Endothelial cell of umbilical vein (primary cell): ENCODE measurements at regions of chr17 and their contacts with region 1.

Region 1: DNA sequence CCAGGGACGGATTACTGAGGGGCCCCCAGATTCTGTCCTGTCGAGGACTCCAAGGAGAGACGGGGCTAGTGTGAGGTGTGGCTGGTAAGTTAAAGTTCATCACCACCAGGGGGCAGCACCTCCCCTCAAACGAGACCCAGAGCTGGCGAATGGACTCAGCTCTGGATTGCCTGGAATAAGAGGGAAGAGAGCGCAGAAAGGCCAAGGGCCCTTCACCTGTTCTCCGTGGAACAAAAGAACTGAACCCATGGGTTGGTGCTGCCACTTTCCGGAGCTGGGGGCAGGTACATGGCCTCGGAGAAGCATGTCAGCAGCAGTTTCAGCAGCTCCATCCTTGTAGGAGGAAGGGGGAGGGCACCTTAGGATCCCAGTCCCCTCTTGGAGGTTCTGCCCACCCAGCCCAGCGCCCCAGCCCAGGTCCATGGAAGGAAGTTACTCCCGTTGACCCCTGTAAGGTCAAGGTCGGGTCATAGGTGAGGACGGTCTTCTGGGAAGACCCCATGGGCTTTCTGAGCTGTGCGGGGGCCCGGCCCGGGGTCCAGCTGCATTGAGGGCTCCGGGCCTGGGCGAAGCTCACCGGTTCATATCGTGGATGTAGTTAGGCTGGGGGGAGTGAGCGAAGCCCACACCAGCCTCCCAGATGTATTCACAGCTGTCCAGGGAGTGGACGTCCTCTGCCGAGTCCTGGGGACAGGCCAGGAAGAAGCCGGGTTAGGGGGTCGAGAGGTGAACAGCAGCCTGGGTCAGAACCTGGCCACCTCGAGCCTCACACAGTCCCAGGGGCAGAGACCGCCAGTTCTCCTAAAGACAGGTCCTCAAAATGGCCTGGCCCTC is 10.7 kb downstream of the HID1 start:
- DNase-seq: peak; percentile 83
- H3K4me3 ChIP-seq: no peak overlapping the region
- H3K27ac ChIP-seq: no peak overlapping the region
- H3K4me1 ChIP-seq: no peaks in the 10 kb centered on the region
- H3K27me3 ChIP-seq: no peaks in the 10 kb centered on the region
- CTCF ChIP-seq: peak; percentile 62 to 74
- POLR2A ChIP-seq: no peak

Region 2: GRCh38 chr17:74790161-74791054 is 171.5 kb before region 1 on chr17:
- CTCF ChIA-PET with region 1: interaction called, 26 read pairs
- POLR2A ChIA-PET with region 1: no interaction called
- dilution Hi-C with region 1: no loop called
- intact Hi-C with region 1: loop called (anchors 1 kb)
- DNase-seq: no peak
- H3K4me3 ChIP-seq: no peak overlapping the region
- H3K27ac ChIP-seq: no peak overlapping the region
- H3K4me1 ChIP-seq: no peaks in the 10 kb centered on the region
- H3K27me3 ChIP-seq: no peaks in the 10 kb centered on the region
- CTCF ChIP-seq: no peak
- POLR2A ChIP-seq: no peak

Region 3: GRCh38 chr17:74815550-74816370 is 146.1 kb before region 1 on chr17:
- CTCF ChIA-PET with region 1: no interaction called
- POLR2A ChIA-PET with region 1: no interaction called
- dilution Hi-C with region 1: no loop called
- intact Hi-C with region 1: no loop called
- DNase-seq: peak; percentile 7
- H3K4me3 ChIP-seq: no peak overlapping the region
- H3K27ac ChIP-seq: no peak overlapping the region
- H3K4me1 ChIP-seq: no peaks in the 10 kb centered on the region
- H3K27me3 ChIP-seq: no peaks in the 10 kb centered on the region
- CTCF ChIP-seq: peak; percentile 31 to 37
- POLR2A ChIP-seq: no peak

Region 4: DNA sequence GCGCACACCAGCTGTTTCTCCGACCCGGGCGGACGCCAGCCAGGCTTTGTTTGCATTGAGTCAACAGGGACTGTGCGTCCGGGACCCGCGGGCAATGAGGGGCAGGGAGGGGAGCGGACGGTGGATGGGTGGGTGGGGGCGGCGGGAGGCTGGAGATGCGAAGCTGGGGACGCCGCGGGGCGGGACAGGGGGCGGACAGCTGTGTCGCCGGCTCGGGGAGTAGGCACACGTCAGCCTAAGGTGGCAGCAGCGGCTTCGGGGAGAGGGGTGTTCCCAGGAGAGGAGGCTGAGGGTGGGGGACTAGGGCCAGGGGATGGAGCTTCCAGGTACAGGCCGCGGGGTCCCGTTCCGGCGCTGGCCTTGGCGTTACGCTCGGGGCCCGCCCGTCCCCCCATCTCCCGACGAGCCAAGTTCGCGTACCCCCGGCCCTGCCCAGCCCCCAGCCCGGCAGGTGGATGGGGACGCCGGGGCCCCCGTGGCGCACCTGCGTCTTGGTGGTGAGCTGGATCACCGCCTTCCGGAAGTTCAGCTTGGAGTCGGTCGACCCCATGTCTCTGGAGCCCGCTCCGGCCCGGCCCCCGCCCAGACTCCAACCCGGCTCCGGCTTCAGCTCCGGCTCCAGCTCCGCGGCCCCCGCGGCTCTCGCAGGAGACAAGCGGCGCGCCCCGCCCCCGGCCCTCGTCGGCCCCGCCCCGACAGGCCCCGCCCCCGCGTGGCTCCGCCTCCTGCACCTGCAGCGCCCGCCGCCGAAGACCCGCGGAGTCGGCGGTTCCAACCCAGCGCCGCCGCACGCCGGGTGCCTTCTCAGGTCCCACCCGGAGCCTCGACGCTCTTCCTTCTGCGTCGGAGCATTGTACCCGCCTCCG is 10.5 kb after region 1 on chr17 and contains the start of gene HID1:
- CTCF ChIA-PET with region 1: interaction called, 63 read pairs
- POLR2A ChIA-PET with region 1: interaction called, 4 read pairs
- dilution Hi-C with region 1: no loop called
- intact Hi-C with region 1: no loop called
- DNase-seq: peak; percentile 39
- H3K4me3 ChIP-seq: peak within 1 kb of the TSS; percentile 51 to 89 (median 74)
- H3K27ac ChIP-seq: no peak within 1 kb of the TSS
- H3K4me1 ChIP-seq: peaks cover 17% of the 10 kb centered on the region
- H3K27me3 ChIP-seq: peaks cover 5% of the 10 kb centered on the region in 2 experiments
- CTCF ChIP-seq: no peak
- POLR2A ChIP-seq: no peak
- total RNA-seq, gene HID1: 36.8 and 41.4 TPM in 2 replicates

Region 5: DNA sequence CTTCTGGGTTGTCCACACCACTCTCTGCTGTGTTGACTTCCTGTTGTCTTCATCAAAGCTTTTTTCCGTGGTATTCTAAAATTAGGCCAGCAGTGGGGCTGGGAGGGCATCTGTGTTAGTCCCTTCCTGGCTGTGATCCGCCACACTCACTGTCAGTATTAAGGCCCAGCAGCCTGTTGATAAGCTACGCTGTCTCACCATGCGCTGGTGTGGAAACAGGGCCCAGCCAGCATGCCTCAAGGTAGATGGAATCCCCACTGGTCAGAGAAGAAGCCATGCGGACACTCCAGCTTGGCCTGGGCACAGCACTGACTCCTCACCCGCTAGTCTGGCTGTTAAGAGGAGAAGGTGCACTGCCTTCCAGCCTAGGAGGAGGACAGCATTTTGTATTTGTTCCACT is 36.9 kb after region 1 on chr17:
- CTCF ChIA-PET with region 1: interaction called, 13 read pairs
- POLR2A ChIA-PET with region 1: no interaction called
- dilution Hi-C with region 1: no loop called
- intact Hi-C with region 1: no loop called
- DNase-seq: no peak
- H3K4me3 ChIP-seq: no peak overlapping the region
- H3K27ac ChIP-seq: no peak overlapping the region
- H3K4me1 ChIP-seq: no peaks in the 10 kb centered on the region
- H3K27me3 ChIP-seq: no peaks in the 10 kb centered on the region
- CTCF ChIP-seq: no peak
- POLR2A ChIP-seq: no peak

Region 6: DNA sequence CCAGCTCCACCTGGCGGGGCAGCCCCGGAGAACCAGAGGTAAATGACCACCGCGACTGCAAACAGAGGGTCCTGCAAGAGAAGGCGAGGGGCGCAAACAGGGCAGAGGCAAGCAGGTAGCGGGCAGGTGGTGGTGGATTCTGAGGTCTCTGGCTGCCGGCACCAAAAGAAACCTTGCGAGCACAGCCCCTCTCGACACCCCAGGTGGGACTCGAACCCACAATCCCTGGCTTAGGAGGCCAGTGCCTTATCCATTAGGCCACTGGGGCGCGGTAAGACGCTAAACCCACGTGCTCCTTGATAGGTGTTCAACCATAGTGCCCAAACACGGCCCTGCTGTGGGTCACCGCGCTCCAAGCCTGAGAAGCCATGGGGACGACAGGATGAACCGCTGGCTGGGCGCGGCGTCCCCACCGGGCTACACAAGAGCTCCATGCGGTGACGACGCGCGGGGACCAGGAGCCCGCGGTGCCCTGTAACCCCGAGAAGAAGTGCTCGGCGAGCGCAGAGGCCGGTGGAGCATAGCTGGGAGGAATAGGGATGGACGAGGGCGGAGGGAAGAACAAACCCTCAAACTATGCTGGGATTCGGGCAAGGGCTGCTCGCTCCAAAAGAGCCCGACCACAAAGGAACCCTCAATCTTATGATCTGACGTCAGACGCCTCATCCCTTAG is 72.5 kb after region 1 on chr17:
- CTCF ChIA-PET with region 1: interaction called, 35 read pairs
- POLR2A ChIA-PET with region 1: interaction called, 3 read pairs
- dilution Hi-C with region 1: no loop called
- intact Hi-C with region 1: loop called (anchors 1 kb)
- DNase-seq: peak; percentile 88
- H3K4me3 ChIP-seq: peak overlapping the region; percentile 58 to 87 (median 74)
- H3K27ac ChIP-seq: peak overlapping the region; percentile 69
- H3K4me1 ChIP-seq: peaks cover 20% of the 10 kb centered on the region
- H3K27me3 ChIP-seq: peaks cover 0 to 2% of the 10 kb centered on the region in 2 experiments
- CTCF ChIP-seq: no peak
- POLR2A ChIP-seq: no peak

Region 7: GRCh38 chr17:75109407-75110233 is 147.7 kb after region 1 on chr17 and contains the start of gene ARMC7:
- CTCF ChIA-PET with region 1: interaction called, 24 read pairs
- POLR2A ChIA-PET with region 1: no interaction called
- dilution Hi-C with region 1: no loop called
- intact Hi-C with region 1: loop called (anchors 1 kb)
- DNase-seq: peak; percentile 81
- H3K4me3 ChIP-seq: peak within 1 kb of the TSS; percentile 71 to 74 (median 73)
- H3K27ac ChIP-seq: no peak within 1 kb of the TSS
- H3K4me1 ChIP-seq: peaks cover 24% of the 10 kb centered on the region
- H3K27me3 ChIP-seq: no peaks in the 10 kb centered on the region
- CTCF ChIP-seq: no peak
- POLR2A ChIP-seq: peak; percentile 92
- total RNA-seq, gene ARMC7: 14.5 and 15.7 TPM in 2 replicates

Region 8: GRCh38 chr17:75205037-75205792 is 243.3 kb after region 1 on chr17 and contains the start of gene NUP85:
- CTCF ChIA-PET with region 1: interaction called, 130 read pairs
- POLR2A ChIA-PET with region 1: interaction called, 3 read pairs
- dilution Hi-C with region 1: no loop called
- intact Hi-C with region 1: loop called (anchors 1 kb)
- DNase-seq: peak; percentile 96
- H3K4me3 ChIP-seq: peak within 1 kb of the TSS; percentile 58 to 91 (median 85)
- H3K27ac ChIP-seq: peak within 1 kb of the TSS; percentile 90
- H3K4me1 ChIP-seq: peaks cover 2% of the 10 kb centered on the region
- H3K27me3 ChIP-seq: no peaks in the 10 kb centered on the region
- CTCF ChIP-seq: no peak
- POLR2A ChIP-seq: peak; percentile 88
- total RNA-seq, gene NUP85: 98.3 and 105 TPM in 2 replicates